ENCODE measurements at regions of chr12 and their contacts with region 1.

Region 1: DNA sequence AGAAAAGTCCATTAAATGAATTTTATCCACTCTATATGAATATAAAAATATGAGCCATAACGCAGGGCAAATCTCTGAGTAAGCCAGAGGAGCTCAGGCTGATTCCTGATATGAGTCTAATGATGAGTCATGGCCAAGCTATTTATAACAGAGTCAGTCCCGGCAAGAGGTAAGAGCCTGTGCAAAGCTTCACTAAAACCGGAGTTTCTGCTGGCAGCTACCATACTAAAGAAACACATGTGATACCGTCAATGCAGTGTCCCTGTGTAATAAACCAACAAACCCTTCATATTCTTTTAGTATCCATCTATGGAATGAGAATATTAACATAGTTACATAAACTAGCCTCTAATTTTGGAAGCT is 319.4 kb downstream of the KCNC2 start:
- H3K4me3 ChIP-seq: no peak overlapping the region
- H3K27ac ChIP-seq: no peak overlapping the region
- H3K4me1 ChIP-seq: 0 out of 2 replicates have a peak, but pooled peaks cover 5% of the 10 kb centered on the region
- CTCF ChIP-seq: no peak

Region 2: DNA sequence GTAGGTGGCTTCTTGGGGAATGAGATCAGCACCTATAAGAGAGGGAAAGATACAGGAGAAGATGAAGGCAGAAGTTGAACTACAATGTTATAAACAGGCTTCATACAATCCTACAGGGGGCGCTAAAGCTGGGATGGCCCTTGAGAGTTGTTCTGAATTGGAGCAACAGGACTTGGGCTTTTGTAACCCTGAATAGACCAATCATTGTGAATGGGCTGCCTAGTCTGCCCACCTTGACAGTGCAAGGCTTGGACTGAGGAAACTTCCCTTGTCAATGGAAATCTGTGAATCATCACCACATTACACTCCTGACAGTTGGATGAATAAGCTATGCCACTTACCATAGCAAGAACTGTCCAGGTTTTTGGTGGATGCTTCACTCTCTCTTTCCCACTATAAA is 13.3 kb after region 1 on chr12:
- CTCF ChIA-PET with region 1: interaction called, 15 read pairs
- POLR2A ChIA-PET with region 1: no interaction called
- H3K4me3 ChIP-seq: no peak overlapping the region
- H3K27ac ChIP-seq: no peak overlapping the region
- H3K4me1 ChIP-seq: no peaks in the 10 kb centered on the region
- CTCF ChIP-seq: no peak